Mammary epithelial cell (primary cell): ENCODE measurements at regions of chr3 and their contacts with region 1.

Region 1: GRCh38 chr3:72818092-72818773 is 30.0 kb downstream of the SHQ1 start:
- DNase-seq: peak; percentile 12
- H3K4me3 ChIP-seq: no peak overlapping the region
- H3K27ac ChIP-seq: no peak overlapping the region
- H3K4me1 ChIP-seq: peaks cover 12% of the 10 kb centered on the region
- H3K27me3 ChIP-seq: no peaks in the 10 kb centered on the region
- CTCF ChIP-seq: peak; percentile 67 to 72

Region 2: DNA sequence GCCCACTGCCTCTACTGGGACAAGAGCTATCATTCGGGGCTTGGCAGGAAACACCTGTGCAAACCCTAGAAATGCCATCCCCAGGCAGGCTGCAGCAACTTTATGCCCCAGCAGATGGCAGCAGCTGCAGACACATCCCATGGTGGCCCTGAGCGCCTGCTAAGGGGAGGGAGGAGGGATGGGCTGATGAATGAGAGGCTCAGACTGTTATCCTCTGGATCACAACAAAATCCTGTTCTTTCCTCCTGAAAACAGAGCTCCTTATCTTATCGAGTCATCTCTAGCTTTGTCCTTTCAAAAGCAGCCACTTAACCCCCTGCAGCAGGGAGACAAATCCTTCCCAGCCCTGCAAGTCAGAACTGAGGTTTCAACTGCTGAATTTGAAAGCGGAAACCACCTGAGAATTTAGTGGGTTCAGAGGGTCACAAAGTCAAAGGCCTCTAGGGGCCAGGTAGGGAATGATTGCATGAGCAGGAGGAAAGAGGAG is 942.7 kb before region 1 on chr3:
- CTCF ChIA-PET with region 1: no interaction called
- dilution Hi-C with region 1: no loop called
- in situ Hi-C with region 1: no loop called
- intact Hi-C with region 1: loop called (anchors 1 kb)
- DNase-seq: peak; percentile 51
- H3K4me3 ChIP-seq: no peak overlapping the region
- H3K27ac ChIP-seq: no peak overlapping the region
- H3K4me1 ChIP-seq: no peaks in the 10 kb centered on the region
- H3K27me3 ChIP-seq: no peaks in the 10 kb centered on the region
- CTCF ChIP-seq: peak; percentile 92 to 94

Region 3: DNA sequence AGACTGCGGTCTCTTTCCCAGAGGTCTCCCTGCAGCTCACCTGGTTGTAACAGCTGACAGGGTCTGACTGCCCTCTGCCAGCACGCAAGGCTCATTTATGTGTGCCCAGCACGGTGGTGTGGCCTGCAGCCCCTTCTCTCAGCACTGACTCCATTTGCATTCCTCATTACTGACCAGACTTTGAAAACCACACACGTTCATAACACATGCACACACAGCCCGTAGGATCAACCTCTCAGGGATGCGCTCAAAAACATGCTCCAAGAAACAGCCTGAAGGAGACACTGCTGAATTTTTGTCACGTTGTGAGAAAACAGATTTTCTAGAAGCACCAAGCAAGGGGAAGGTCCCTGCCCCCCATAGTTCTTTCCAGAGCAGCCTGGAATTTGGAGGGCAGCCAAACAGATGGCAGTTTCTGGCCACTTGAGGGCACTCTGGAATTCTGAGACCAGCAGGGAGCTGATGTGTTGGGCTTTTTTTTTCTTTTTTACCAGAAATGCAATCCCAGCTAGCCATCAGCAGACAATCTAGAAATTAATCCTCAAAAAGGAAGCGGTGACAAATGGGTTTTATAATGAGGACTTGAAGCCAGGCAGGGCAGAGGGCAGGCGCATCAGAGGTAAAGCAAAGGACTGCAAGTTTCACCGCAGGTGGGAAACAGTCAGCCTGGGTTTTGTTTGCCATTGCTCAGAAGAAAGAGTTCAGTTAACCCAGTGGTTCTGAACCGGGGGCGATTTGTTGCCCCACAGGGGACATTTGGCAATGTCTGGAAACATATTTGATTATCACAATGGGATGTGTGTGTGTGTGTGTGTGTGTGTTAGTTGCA is 862.8 kb before region 1 on chr3:
- CTCF ChIA-PET with region 1: no interaction called
- dilution Hi-C with region 1: no loop called
- in situ Hi-C with region 1: no loop called
- intact Hi-C with region 1: loop called (anchors 1 kb)
- DNase-seq: peak; percentile 48
- H3K4me3 ChIP-seq: no peak overlapping the region
- H3K27ac ChIP-seq: no peak overlapping the region
- H3K4me1 ChIP-seq: no peaks in the 10 kb centered on the region
- H3K27me3 ChIP-seq: no peaks in the 10 kb centered on the region
- CTCF ChIP-seq: peak; percentile 65 to 81

Region 4: DNA sequence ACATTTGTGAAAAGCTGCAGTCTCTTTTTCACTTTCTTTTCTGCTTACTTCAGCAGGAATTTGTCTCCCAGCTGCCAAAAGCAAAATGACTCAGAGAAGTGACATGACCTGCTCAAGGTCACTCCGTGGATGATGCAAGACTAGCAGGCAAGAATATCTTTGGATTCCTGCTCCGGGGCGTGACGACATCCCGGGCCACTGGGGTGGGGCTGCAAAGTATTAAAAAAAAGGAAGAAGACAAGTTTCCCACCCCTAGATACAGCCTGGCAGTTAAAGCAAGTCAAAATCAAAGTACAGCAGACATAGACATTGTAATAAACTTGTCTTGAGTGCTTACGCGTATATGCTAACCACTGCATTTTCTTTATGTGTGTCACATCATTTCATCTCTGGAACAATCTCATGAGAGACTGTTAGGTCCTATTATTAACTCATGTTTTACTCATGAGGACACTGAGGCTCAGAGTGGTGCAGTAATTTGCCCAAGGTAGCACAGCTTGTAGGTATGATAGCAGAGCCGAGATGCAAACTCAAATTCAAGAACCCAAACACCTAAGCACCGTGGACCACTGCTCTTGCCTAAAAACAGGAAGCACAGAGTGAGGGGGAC is 548.1 kb before region 1 on chr3:
- CTCF ChIA-PET with region 1: no interaction called
- dilution Hi-C with region 1: no loop called
- in situ Hi-C with region 1: no loop called
- intact Hi-C with region 1: loop called (anchors 2 kb)
- DNase-seq: peak; percentile 67
- H3K4me3 ChIP-seq: no peak overlapping the region
- H3K27ac ChIP-seq: no peak overlapping the region
- H3K4me1 ChIP-seq: peaks cover 10% of the 10 kb centered on the region
- H3K27me3 ChIP-seq: peaks cover 4% of the 10 kb centered on the region
- CTCF ChIP-seq: no peak

Region 5: GRCh38 chr3:72447059-72447946 is 370.9 kb before region 1 on chr3:
- CTCF ChIA-PET with region 1: interaction called, 5 read pairs
- dilution Hi-C with region 1: no loop called
- in situ Hi-C with region 1: loop called in 1 of 2 experiments (anchors 25 kb)
- intact Hi-C with region 1: loop called (anchors 2 kb)
- DNase-seq: peak; percentile 83
- H3K4me3 ChIP-seq: peak overlapping the region; percentile 33 to 92 (median 84)
- H3K27ac ChIP-seq: peak overlapping the region; percentile 89
- H3K4me1 ChIP-seq: peaks cover 18% of the 10 kb centered on the region
- H3K27me3 ChIP-seq: no peaks in the 10 kb centered on the region
- CTCF ChIP-seq: no peak

Region 6: GRCh38 chr3:73041537-73041936 is 223.3 kb after region 1 on chr3:
- CTCF ChIA-PET with region 1: no interaction called
- dilution Hi-C with region 1: no loop called
- in situ Hi-C with region 1: no loop called
- intact Hi-C with region 1: no loop called
- DNase-seq: no peak
- H3K4me3 ChIP-seq: no peak overlapping the region
- H3K27ac ChIP-seq: no peak overlapping the region
- H3K4me1 ChIP-seq: peaks cover 21% of the 10 kb centered on the region
- H3K27me3 ChIP-seq: no peaks in the 10 kb centered on the region
- CTCF ChIP-seq: no peak

Region 7: GRCh38 chr3:73150369-73151130 is 332.3 kb after region 1 on chr3:
- CTCF ChIA-PET with region 1: no interaction called
- dilution Hi-C with region 1: no loop called
- in situ Hi-C with region 1: no loop called
- intact Hi-C with region 1: no loop called
- DNase-seq: no peak
- H3K4me3 ChIP-seq: no peak overlapping the region
- H3K27ac ChIP-seq: no peak overlapping the region
- H3K4me1 ChIP-seq: no peaks in the 10 kb centered on the region
- H3K27me3 ChIP-seq: no peaks in the 10 kb centered on the region
- CTCF ChIP-seq: no peak